HEK293T (cell line): ENCODE measurements at regions of chr17 and their contacts with region 1.

Region 1: GRCh38 chr17:63842540-63843386 is at the start of gene SMARCD2:
- DNase-seq: peak; percentile 99

Region 2: GRCh38 chr17:63827002-63827771 is 15.6 kb before region 1 on chr17 and contains the starts of genes FTSJ3 and PSMC5:
- CTCF ChIA-PET with region 1: interaction called, 4 read pairs
- POLR2A ChIA-PET with region 1: interaction called, 67 read pairs
- DNase-seq: peak; percentile 92

Region 3: DNA sequence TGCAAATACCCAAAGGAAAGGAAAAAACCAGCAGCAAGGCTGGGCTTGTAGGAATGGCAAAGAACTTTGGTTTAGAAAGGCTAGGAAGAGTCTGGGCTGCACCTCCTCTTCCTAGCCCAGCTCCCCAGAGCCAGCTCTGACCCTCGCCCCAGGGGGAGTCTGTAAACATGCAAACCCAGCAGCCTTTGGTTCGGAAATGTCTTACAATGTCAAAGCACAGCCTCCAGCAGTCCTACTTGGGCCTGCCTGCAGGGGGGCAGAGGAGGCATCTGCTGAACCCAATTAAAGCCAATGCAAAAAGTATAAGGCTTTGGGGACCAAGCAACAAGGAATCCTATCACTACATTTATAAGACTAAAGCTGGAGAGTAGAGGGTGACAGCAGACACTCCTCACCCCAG is 10.3 kb before region 1 on chr17:
- CTCF ChIA-PET with region 1: interaction called, 5 read pairs
- POLR2A ChIA-PET with region 1: interaction called, 67 read pairs
- DNase-seq: no peak

Region 4: DNA sequence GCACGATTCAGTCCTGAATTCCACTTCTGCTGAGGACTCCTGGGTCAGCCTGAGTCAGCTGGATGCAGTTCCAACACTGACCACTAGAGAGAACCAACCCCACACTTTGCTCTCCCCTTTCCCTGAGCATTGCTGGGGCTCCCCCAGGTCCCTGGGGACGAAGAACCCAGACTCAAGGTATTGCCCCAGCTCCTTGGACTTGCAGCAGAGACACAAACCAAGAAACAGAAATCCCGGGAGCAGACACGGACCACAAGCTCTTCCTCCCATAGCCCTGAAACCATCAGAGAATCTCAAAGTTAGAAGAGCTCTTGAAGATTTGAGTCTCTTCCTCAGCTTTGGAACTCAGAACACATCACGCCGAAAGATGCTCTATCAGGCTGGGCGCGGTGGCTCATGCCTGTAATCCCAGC is 76.6 kb after region 1 on chr17:
- CTCF ChIA-PET with region 1: no interaction called
- POLR2A ChIA-PET with region 1: no interaction called
- DNase-seq: peak; percentile 80

Region 5: DNA sequence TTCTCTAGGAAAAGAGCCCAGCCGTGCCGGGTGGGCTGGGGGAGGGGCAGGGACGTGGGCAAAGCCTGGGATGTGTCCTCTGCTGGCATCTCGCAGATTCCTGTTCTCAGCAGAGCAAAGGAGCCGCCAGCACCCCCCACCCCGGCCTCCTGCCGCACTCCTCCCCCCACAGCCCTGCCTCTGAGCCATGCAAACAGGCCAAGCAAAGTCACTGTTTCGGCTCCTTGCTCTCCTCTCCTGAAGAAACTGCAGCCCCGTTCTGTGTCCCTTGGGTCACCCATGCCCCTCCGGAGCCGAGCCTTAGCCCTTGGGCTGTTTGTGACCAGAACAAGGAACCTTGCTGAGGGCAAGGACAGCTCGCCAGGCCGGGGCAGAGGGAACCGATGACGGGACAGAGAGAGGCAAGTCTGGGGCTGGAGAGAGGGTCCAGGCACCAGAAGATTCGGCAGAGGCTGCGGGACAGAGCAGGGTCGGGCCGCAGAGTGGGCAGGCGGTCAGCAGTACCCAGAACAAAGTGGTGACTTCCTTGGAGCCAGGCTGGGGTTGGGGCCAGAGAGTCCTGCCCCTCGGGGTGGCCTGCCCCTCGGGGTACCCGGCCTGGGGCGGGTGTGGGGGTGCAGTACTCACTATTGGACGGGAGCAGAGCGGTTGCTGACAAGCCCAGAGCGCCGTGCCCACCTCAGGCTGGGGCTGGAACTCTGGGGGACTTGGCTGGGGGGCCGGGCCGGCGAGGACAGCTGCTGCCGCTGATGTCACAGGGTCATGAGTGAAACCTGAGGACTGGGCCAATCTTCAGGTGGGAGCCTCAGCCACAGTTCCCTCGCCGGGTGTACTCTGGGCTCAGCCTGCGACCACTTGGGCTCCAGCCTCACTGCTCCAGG is 146.2 kb after region 1 on chr17:
- CTCF ChIA-PET with region 1: no interaction called
- POLR2A ChIA-PET with region 1: no interaction called
- DNase-seq: no peak